PC-9 (cell line): ENCODE measurements at regions of chr12 and their contacts with region 1.

Region 1: GRCh38 chr12:120469450-120470149 is at the start of gene SRSF9:
- DNase-seq: peak; percentile 82 to 94
- H3K4me3 ChIP-seq: peak within 1 kb of the TSS; percentile 77
- H3K27ac ChIP-seq: peak within 1 kb of the TSS; percentile 54
- H3K4me1 ChIP-seq: peaks cover 52% of the 10 kb centered on the region
- H3K27me3 ChIP-seq: no peaks in the 10 kb centered on the region
- CTCF ChIP-seq: peak; percentile 77
- total RNA-seq, gene SRSF9: 231 and 253 TPM in 2 replicates

Region 2: DNA sequence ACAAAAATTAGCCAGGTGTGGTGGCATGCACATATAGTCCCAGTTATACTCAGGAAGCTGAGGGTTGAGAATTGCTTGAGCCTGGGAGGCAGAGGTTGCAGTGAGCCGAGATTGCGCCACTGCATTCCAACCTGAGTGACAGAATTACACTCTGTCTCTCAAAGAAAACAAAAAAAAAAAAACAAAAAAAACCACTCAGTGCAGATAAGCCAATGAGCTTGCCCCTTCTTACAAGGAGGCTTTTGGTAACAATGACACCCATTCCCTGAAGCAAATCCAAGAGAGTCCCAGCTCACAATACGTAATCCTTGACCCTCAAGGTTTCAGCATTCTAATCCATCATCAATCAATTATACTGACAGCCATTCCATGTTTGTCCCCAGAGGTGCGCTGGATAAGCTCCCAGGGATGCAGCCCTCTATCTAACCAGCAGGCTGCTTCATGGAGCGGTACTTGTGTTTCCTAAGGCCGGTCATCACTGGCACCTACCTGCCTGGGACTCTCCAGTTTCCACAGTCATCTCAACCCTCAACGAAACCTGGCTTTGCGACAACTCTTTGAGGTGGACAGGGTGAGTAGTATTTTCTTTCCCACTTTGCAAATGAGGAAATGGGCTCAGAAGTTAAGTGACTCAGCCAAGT is 287.5 kb before region 1 on chr12:
- CTCF ChIA-PET with region 1: interaction called, 12 read pairs
- POLR2A ChIA-PET with region 1: no interaction called
- intact Hi-C with region 1: no loop called
- DNase-seq: peak; percentile 61 to 88
- H3K4me3 ChIP-seq: no peak overlapping the region
- H3K27ac ChIP-seq: peak overlapping the region; percentile 84
- H3K4me1 ChIP-seq: peaks cover 27% of the 10 kb centered on the region
- H3K27me3 ChIP-seq: no peaks in the 10 kb centered on the region
- CTCF ChIP-seq: no peak

Region 3: GRCh38 chr12:120356567-120357030 is 113.0 kb before region 1 on chr12:
- CTCF ChIA-PET with region 1: no interaction called
- POLR2A ChIA-PET with region 1: no interaction called
- intact Hi-C with region 1: loop called (anchors 1 kb)
- DNase-seq: peak; percentile 92 to 94
- H3K4me3 ChIP-seq: peak overlapping the region; percentile 22; the same call in 1 of the 2 replicates
- H3K27ac ChIP-seq: no peak overlapping the region
- H3K4me1 ChIP-seq: peaks cover 5% of the 10 kb centered on the region; the same call in 1 of the 2 replicates
- H3K27me3 ChIP-seq: no peaks in the 10 kb centered on the region
- CTCF ChIP-seq: peak; percentile 89

Region 4: DNA sequence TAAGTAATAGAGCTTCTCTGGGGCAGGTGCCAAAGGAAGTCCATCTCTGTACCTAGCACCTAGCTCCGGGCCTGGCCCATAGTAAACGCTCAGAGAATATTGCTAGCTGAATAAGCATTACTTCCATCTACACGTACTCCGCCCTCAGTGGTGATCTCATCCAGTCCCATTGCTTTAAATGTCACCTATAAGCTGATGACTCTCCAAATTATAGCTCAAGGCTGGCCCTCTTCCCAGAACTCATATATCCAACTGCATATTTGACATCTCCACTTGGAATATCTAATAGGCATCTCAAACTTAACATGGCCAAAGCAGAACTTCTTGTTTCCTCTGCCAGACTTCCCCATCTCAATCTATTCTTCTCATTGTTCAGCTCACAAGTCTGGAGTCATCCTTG is 19.4 kb after region 1 on chr12:
- CTCF ChIA-PET with region 1: no interaction called
- POLR2A ChIA-PET with region 1: interaction called, 19 read pairs
- intact Hi-C with region 1: loop called (anchors 2 kb)
- DNase-seq: no peak
- H3K4me3 ChIP-seq: no peak overlapping the region
- H3K27ac ChIP-seq: no peak overlapping the region
- H3K4me1 ChIP-seq: no peaks in the 10 kb centered on the region
- H3K27me3 ChIP-seq: no peaks in the 10 kb centered on the region
- CTCF ChIP-seq: no peak

Region 5: GRCh38 chr12:120534203-120534702 is 64.7 kb after region 1 on chr12 and contains the start of gene RNF10:
- CTCF ChIA-PET with region 1: no interaction called
- POLR2A ChIA-PET with region 1: interaction called, 4 read pairs
- intact Hi-C with region 1: loop called (anchors 1 kb)
- DNase-seq: peak; percentile 64 to 67
- H3K4me3 ChIP-seq: peak within 1 kb of the TSS; percentile 97
- H3K27ac ChIP-seq: peak within 1 kb of the TSS; percentile 60
- H3K4me1 ChIP-seq: peaks cover 55% of the 10 kb centered on the region
- H3K27me3 ChIP-seq: no peaks in the 10 kb centered on the region
- CTCF ChIP-seq: no peak
- total RNA-seq, gene RNF10: 196 and 241 TPM in 2 replicates

Region 6: DNA sequence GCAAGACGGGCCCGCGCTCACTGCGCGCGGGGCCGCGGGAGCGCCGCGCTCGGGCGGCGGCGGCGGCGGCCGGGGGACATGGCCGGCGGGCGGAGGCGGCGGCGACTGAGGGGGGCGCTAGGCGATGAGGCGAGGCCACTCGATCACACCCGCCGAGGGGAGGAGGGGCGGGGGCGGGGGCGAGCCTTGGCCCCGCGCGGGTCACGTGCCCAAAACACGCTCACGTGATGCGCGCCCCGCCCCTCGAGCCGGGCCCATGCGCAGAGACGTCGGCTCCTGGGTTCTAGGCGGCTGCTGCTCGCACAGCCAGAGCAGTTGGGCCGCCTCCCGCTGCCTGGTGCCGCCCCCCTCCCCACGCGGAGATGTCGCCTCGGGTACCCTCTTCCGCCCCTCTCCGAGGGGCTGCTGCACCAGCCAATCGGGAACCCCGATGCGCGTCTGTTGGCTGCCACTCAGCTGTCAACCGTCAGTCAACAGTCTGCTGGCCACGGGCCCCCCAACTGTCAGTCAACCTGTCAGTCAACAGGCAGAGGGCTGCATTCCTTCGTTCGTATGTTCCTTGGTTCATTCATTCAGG is 434.7 kb after region 1 on chr12 and contains the start of gene SPPL3:
- CTCF ChIA-PET with region 1: no interaction called
- POLR2A ChIA-PET with region 1: no interaction called
- intact Hi-C with region 1: no loop called
- DNase-seq: peak; percentile 58 to 89
- H3K4me3 ChIP-seq: peak within 1 kb of the TSS; percentile 93
- H3K27ac ChIP-seq: no peak within 1 kb of the TSS
- H3K4me1 ChIP-seq: peaks cover 25% of the 10 kb centered on the region
- H3K27me3 ChIP-seq: no peaks in the 10 kb centered on the region
- CTCF ChIP-seq: no peak
- total RNA-seq, gene SPPL3: 27.1 and 44.7 TPM in 2 replicates